ENCODE measurements at regions of chr1 and their contacts with region 1.

Region 1: DNA sequence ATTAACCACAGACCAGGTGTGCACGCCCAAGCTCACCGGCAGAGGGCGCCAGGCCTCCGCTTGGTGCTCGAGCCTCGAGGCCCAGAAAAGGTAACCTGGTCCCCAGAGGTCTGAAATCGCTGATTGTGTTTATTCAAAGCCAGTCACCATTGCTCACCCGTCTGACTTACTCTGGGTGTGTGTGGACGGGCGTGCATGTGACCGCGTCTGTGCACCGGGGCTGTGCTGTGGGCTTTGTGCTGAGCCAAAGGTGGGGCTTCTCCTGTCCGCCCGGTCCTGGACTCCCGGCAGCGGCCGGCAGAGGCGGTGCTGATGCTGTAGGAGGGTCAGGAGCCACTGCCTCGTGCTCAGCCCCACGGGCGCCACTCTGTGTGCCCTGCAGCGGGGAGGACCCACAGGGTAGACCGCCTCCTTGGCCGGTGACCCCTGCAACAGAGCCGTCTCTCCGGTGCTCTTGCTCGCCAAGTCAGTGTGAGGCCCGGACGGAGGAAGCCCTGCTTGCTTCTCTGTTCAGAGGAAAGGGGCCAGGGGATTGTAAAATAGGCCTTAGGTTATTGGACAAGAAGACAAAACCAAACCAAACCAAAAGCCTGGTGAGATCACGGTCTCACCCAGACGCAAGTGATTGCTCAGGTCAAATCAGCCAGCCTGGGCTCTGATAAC is 32.0 kb upstream of the BTG2 start:
- DNase-seq: peak; percentile 95

Region 2: DNA sequence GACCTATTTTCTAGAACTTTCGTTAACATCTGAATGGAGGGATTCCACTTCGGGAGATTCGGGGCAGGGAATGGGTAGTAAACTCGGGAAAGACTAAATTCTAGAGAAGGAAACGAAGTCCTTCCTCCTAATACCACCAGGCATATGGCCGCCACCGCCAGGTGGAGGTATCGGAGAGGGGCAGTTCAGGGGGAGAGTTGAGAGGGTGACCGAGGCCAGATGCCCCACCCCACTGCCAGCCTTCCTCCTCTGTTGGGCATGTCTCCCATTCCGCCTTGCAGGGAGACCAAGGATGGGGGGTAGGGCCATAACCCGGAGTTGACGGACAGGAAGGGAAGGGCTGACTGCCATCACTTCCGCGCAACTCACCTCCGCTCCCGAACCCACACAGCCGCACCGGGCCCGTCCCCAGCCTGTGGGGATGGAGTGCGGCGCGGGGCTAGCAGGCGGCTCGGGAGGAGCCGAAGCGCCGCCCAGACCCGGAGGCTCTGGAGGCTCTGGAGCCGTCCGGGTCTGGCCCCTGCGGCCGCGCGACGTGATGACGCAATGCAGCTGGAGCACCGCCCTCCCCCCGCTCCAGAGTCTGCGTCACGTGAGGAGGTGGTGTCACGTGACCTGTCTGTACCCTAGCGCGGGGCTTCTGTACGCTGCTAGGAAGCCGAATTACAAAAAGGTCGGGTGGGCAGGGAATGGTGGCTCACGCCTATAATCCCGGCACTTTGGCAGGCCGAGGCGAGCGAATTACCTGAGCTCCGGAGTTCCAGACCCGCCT is 346.4 kb before region 1 on chr1 and contains the start of gene KLHL12:
- intact Hi-C with region 1: no loop called
- DNase-seq: peak; percentile 98
- total RNA-seq, gene KLHL12: 23.3 TPM

Region 3: DNA sequence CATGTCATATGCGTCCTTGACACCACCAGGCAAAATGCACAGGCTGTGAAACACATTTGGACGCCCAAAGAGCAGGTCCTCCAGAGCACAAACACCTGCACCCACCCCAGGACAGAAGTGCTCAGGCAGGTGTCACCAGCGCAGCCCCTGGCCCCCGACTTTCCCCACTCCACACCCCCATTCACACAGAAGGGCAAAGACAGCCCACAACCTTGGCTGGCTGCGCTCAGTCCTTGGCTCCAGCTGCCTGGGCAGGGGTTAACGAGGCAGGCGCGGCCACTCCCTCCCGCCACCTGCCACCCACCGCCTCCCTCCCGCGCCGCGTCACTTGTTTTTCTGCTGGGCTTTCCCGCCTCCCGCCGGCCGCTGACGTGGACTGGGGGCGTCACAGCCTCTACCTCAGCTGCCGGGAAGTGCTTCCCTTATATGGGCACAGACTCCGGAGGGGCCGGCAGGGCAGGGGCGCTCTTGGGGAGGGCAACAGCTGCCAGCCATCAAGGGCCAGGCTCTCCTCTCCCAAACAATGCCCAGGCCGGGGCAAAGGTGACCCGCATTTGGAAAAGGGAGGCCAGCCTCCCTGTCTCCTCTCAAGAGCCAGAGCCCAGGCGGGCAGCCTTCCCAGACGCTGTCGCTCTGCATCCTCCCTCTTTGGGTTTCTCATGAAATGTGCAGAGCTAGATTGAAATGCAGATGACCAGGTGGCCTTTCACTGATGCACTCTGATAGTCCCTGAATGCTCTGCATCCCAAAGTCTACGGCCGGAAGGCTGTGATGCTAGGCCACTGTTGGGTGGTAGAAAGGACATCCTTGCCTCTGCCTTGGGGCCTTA is 17.1 kb after region 1 on chr1:
- intact Hi-C with region 1: loop called (anchors 1 kb)
- DNase-seq: peak; percentile 98

Region 4: DNA sequence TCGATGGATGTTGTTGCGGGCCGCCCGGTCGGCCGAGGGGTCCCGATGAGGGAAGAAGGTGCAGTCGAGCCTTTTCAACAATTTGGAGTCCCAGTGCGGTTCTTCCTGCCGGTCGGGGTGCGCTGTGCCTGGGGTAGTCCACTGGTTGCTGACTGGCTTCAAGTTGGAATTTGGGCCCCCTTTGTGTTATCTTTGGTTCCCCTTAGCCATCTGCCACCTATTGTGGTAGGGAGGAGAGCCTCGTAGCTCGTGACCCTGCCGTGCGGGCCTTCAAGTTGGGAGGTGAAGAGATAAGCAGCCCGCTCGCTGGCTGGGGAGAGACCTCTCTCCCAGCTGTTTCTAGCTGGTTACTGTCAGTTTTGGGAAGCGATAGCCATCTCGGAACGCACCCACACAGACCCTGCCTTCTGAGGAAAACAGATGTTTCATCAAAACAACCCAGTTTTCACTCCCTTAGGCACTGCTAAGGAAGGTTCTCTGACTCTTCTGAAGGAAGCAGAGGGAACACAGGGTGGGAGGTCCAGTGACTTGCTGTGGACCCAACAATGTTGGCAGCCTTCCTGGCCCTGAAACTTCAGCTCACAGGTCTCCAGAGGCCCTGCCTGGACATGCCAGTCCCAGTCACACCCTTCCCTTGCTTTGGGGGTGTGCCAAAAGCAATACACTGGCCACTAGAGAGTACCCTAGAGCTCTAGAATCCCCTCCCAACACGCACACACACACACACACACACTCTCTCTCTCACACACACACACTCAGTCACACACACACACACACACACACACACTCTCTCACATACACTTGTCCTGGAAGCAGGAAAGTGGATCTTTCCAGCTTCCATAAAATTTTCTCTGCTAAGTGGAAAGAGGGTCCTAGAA is 33.0 kb after region 1 on chr1:
- intact Hi-C with region 1: loop called (anchors 1 kb)
- DNase-seq: peak; percentile 93

Region 5: DNA sequence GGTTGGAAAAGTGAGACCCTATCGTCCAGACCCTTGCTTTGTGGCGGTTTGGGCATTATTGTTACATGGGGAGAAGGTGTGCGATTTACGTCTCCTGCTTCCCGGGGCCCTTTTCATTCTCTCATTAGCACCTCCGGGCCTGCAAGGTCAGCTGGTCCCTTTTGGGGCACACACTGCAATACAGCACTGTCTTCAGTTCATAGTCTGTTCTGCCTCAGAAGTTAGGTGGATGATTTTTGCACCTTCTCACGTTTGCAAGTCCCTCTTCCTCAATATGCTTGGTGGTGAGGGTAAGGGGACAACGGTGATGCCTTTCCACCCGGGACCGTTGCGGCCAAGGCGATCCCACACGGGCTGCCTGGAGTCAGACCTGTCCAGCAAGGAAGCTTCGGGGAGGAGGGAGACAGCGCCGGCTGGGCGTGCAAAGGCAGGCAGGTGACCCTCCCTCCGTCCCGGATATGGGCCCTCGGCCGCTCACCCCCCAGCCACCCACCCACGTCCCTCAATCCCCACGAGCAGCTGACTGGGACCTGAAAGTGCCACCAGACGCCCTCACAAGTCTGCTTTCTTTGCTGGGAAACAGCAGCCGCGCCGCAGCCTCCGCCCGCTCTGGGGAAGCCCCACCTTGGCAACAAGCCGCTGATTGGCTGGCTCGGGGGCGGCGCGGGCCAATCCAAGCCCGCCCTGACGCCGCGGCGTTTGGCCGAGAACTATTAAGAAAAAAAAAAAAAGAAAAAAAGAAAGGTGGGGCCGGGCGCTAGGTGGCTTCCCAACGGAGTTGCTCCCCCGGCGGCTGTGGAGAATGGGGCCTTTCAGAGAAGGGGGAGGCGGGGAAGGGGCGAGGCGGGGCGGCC is 53.7 kb after region 1 on chr1:
- intact Hi-C with region 1: loop called (anchors 1 kb)
- DNase-seq: peak; percentile 98

Region 6: GRCh38 chr1:203340112-203340804 is 66.9 kb after region 1 on chr1:
- intact Hi-C with region 1: loop called (anchors 1 kb)
- DNase-seq: peak; percentile 83

Region 7: GRCh38 chr1:203440771-203441170 is 167.4 kb after region 1 on chr1:
- intact Hi-C with region 1: loop called (anchors 2 kb)
- DNase-seq: peak; percentile 81

Region 8: GRCh38 chr1:203486618-203487370 is 213.5 kb after region 1 on chr1:
- intact Hi-C with region 1: loop called (anchors 2 kb)
- DNase-seq: no peak

Region 9: GRCh38 chr1:203526572-203526971 is 253.2 kb after region 1 on chr1:
- intact Hi-C with region 1: no loop called
- DNase-seq: no peak

Measured in cardiac septum (tissue), 1 donor.